OCI-LY7 (cell line): ENCODE measurements at regions of chr2 and their contacts with region 1.

Region 1: GRCh38 chr2:213021971-213022899 is 129.2 kb downstream of the IKZF2 start:
- DNase-seq: no peak
- H3K4me3 ChIP-seq: no peak overlapping the region
- H3K27ac ChIP-seq: peak overlapping the region; percentile 64
- H3K4me1 ChIP-seq: peaks cover 17% of the 10 kb centered on the region
- CTCF ChIP-seq: no peak

Region 2: DNA sequence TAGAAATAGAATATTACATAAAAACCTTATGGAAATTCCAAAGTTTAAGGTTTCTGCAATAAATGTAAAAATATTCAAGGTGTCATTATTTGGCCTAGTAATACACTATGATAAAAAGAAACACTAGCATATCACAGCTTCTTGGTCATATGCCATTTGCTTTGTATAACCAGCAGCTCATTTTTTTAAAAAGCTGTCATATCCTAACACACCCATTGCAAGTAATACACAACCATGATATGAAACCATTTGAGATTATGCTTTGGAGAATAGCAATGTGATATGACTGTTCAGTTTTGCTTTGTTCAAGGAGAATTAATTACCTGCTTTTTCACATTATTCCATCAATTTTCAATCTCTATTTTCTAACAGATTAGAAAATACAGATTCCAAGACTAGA is 19.9 kb before region 1 on chr2:
- CTCF ChIA-PET with region 1: no interaction called
- POLR2A ChIA-PET with region 1: interaction called, 11 read pairs
- intact Hi-C with region 1: no loop called
- DNase-seq: no peak
- H3K4me3 ChIP-seq: no peak overlapping the region
- H3K27ac ChIP-seq: no peak overlapping the region
- H3K4me1 ChIP-seq: peaks cover 25% of the 10 kb centered on the region
- CTCF ChIP-seq: no peak

Region 3: GRCh38 chr2:213036836-213037235 is 14.6 kb after region 1 on chr2:
- CTCF ChIA-PET with region 1: no interaction called
- POLR2A ChIA-PET with region 1: interaction called, 21 read pairs
- intact Hi-C with region 1: no loop called
- DNase-seq: peak; percentile 9
- H3K4me3 ChIP-seq: peak overlapping the region; percentile 45
- H3K27ac ChIP-seq: peak overlapping the region; percentile 96
- H3K4me1 ChIP-seq: peaks cover 63% of the 10 kb centered on the region
- CTCF ChIP-seq: no peak